Activated CD8-positive, alpha-beta T cell treated with anti-CD3 and anti-CD28 coated beads, Interleukin-2, amount 10 ng/mL, durations not matched to agents 7 days and 5 days (primary cell): ENCODE measurements at regions of chr12 and their contacts with region 1.

Region 1: GRCh38 chr12:14937689-14938088 is 648 bp downstream of the ERP27 start:
- DNase-seq: no peak
- ATAC-seq: peak; percentile 56
- H3K4me3 Mint-ChIP-seq: no peak overlapping the region
- H3K27ac Mint-ChIP-seq: peak overlapping the region; percentile 21
- H3K4me1 Mint-ChIP-seq: peaks cover 20% of the 10 kb centered on the region
- H3K27me3 Mint-ChIP-seq: no peaks in the 10 kb centered on the region

Region 2: DNA sequence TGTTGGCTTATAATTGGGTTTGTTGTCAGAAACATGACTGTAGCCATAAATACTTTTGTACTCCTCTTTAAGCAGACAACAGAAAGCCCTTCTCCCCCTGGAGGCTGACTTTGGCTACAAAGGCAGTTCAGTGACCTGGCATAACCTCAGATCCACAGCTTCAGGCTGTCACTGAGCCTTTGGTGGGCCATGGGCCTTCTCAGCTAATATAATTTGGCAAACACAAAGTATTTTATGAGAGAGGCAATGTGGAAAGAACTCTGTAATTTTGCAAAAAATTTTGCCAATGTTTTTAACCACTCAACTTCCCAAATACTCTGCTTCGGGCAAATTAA is 36.5 kb before region 1 on chr12:
- CTCF ChIA-PET with region 1: no interaction called
- POLR2A ChIA-PET with region 1: no interaction called
- DNase-seq: no peak
- ATAC-seq: no peak
- H3K4me3 Mint-ChIP-seq: no peak overlapping the region
- H3K27ac Mint-ChIP-seq: no peak overlapping the region
- H3K4me1 Mint-ChIP-seq: peaks cover 3% of the 10 kb centered on the region
- H3K27me3 Mint-ChIP-seq: no peaks in the 10 kb centered on the region

Region 3: GRCh38 chr12:14920475-14921126 is 17.1 kb before region 1 on chr12:
- CTCF ChIA-PET with region 1: interaction called, 14 read pairs
- POLR2A ChIA-PET with region 1: no interaction called
- DNase-seq: no peak
- ATAC-seq: peak; percentile 90
- H3K4me3 Mint-ChIP-seq: no peak overlapping the region
- H3K27ac Mint-ChIP-seq: peak overlapping the region; percentile 62
- H3K4me1 Mint-ChIP-seq: peaks cover 24% of the 10 kb centered on the region
- H3K27me3 Mint-ChIP-seq: no peaks in the 10 kb centered on the region

Region 4: DNA sequence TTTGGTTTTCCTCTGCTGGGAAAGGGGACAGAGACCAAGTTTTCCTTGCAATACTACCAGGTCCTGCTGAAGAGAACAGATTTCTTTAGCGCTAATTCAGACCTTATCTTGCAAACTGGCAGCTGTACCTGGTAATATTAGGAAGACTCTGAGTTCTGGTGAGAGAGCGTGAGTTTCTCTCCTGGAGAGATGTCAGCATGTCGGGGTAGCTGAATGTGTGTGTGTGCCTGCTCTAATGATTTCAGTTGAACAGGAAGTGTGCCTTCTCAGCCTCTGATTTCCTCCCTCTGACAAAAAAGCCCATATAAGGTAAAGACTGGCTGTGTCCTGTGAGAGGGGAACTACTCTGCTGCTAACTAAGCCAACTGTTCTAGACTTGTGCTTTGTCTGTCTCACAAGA is 11.0 kb after region 1 on chr12:
- CTCF ChIA-PET with region 1: interaction called, 17 read pairs
- POLR2A ChIA-PET with region 1: interaction called, 15 read pairs
- DNase-seq: peak; percentile 81
- ATAC-seq: peak; percentile 79
- H3K4me3 Mint-ChIP-seq: peak overlapping the region; percentile 76
- H3K27ac Mint-ChIP-seq: peak overlapping the region; percentile 93
- H3K4me1 Mint-ChIP-seq: peaks cover 83% of the 10 kb centered on the region
- H3K27me3 Mint-ChIP-seq: no peaks in the 10 kb centered on the region